Activated CD8-positive, alpha-beta T cell treated with anti-CD3 and anti-CD28 coated beads for 36 hours (primary cell): ENCODE measurements at regions of chr5 and their contacts with region 1.

Region 1: GRCh38 chr5:119315516-119315949 is 40.3 kb upstream of the TNFAIP8 start:
- DNase-seq: peak; percentile 84
- ATAC-seq: peak; percentile 79
- H3K4me3 Mint-ChIP-seq: peak overlapping the region; percentile 38
- H3K27ac Mint-ChIP-seq: peak overlapping the region; percentile 81
- H3K4me1 Mint-ChIP-seq: peaks cover 93% of the 10 kb centered on the region
- H3K27me3 Mint-ChIP-seq: no peaks in the 10 kb centered on the region
- CTCF ChIP-seq: peak; percentile 70

Region 2: GRCh38 chr5:119302916-119303897 is 12.3 kb before region 1 on chr5:
- CTCF ChIA-PET with region 1: interaction called, 14 read pairs
- POLR2A ChIA-PET with region 1: interaction called, 3 read pairs
- intact Hi-C with region 1: no loop called
- DNase-seq: no peak
- ATAC-seq: peak; percentile 46
- H3K4me3 Mint-ChIP-seq: no peak overlapping the region
- H3K27ac Mint-ChIP-seq: peak overlapping the region; percentile 88
- H3K4me1 Mint-ChIP-seq: peaks cover 91% of the 10 kb centered on the region
- H3K27me3 Mint-ChIP-seq: no peaks in the 10 kb centered on the region
- CTCF ChIP-seq: no peak